ENCODE measurements at regions of chr19 and their contacts with region 1.

Region 1: GRCh38 chr19:58182989-58183816 is at the start of gene ZNF274:
- DNase-seq: peak; percentile 98
- ATAC-seq: peak; percentile 91
- H3K4me3 Mint-ChIP-seq: peak within 1 kb of the TSS; percentile 88
- H3K27ac Mint-ChIP-seq: peak within 1 kb of the TSS; percentile 99
- H3K4me1 Mint-ChIP-seq: peaks cover 16% of the 10 kb centered on the region
- H3K27me3 Mint-ChIP-seq: no peaks in the 10 kb centered on the region
- total RNA-seq, gene ZNF274: 20.2 to 20.5 TPM

Region 2: GRCh38 chr19:56538254-56538760 is 1644.9 kb before region 1 on chr19:
- CTCF ChIA-PET with region 1: no interaction called
- POLR2A ChIA-PET with region 1: no interaction called
- intact Hi-C with region 1: loop called in 1 of 2 experiments (anchors 1 kb)
- DNase-seq: peak; percentile 95
- ATAC-seq: peak; percentile 97
- H3K4me3 Mint-ChIP-seq: peak overlapping the region; percentile 74
- H3K27ac Mint-ChIP-seq: peak overlapping the region; percentile 87
- H3K4me1 Mint-ChIP-seq: peaks cover 15% of the 10 kb centered on the region
- H3K27me3 Mint-ChIP-seq: no peaks in the 10 kb centered on the region

Region 3: DNA sequence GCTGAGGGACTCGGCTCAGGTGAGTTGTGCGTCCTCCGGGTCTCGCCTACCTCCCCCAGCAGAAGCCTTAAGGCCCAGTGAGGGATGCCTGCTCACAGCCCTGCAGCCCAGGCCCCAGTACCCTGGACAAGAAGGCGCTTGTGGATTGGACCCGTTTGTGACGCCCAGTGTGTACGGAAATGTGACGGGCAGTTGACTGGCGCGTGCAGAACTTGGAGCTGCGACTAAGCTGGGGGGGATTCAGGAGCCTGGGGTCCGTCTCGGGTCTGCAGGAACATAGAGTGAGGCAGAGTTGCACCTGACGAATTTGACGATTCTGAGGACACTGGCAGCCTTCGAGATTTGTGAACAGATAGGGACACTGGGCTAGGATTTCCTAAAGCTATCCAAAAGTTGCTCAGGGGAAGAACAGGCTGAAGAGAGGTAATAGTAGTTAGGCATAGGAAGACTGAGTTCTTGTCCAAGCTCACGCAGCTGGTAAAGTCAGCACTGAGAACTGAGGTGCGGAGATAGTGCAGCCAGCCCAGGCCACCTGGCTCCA is 500.9 kb before region 1 on chr19:
- CTCF ChIA-PET with region 1: no interaction called
- POLR2A ChIA-PET with region 1: no interaction called
- intact Hi-C with region 1: loop called in 1 of 2 experiments (anchors 2 kb)
- DNase-seq: no peak
- ATAC-seq: no peak
- H3K4me3 Mint-ChIP-seq: peak overlapping the region; percentile 85
- H3K27ac Mint-ChIP-seq: peak overlapping the region; percentile 93
- H3K4me1 Mint-ChIP-seq: peaks cover 31% of the 10 kb centered on the region
- H3K27me3 Mint-ChIP-seq: peaks cover under 1% of the 10 kb centered on the region

Region 4: DNA sequence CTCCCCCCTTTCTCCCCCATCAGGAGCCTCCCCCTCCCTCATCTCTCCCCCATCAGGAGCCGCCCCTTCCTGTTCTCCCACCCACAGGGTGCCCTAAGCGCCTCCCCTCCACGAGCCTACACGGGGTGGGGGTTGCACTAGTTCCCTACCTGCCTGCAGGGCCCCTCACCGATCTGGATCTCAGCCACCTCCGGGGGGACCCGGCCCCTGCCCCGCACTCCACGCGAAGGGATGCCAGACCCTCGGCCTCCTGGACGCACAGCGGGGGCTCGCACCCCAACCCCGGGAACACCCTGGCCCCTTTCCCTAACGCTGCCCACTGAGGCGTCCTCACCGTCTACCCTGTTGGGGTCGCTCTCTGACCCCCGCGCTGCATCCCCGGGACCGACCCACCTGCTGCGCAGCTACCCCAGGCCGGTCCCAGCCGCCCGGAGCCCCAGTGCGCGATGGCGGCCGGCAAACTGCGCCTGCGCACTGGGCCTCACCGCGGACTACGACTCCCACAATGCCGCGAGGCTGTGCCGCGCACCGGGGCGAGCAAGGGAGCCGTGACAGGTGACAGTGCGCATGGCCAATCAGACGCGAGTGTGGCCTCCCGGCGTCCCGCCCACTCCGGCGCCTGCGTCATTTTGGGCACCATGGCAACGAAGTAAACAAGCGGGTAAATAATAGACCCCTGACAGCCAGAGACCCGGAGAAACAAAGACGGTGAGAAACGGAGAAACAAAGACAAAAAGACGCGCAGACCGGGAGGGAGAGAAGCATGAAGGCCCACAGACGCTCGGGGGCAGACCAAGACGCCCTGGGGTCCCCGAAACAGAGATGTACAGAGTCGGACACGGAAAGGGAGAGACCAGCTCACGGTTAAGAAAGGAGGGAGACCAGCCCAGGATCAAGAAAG is 85.2 kb before region 1 on chr19 and contains the start of gene ZSCAN18:
- CTCF ChIA-PET with region 1: no interaction called
- POLR2A ChIA-PET with region 1: no interaction called
- intact Hi-C with region 1: loop called in 1 of 2 experiments (anchors 1 kb)
- DNase-seq: peak; percentile 97
- ATAC-seq: peak; percentile 99
- H3K4me3 Mint-ChIP-seq: peak within 1 kb of the TSS; percentile 82
- H3K27ac Mint-ChIP-seq: peak within 1 kb of the TSS; percentile 97
- H3K4me1 Mint-ChIP-seq: peaks cover 13% of the 10 kb centered on the region
- H3K27me3 Mint-ChIP-seq: no peaks in the 10 kb centered on the region
- total RNA-seq, gene ZSCAN18: 23.1 to 29.2 TPM

Region 5: GRCh38 chr19:58128041-58128685 is 55.0 kb before region 1 on chr19:
- CTCF ChIA-PET with region 1: no interaction called
- POLR2A ChIA-PET with region 1: no interaction called
- intact Hi-C with region 1: no loop called
- DNase-seq: no peak
- ATAC-seq: no peak
- H3K4me3 Mint-ChIP-seq: no peak overlapping the region
- H3K27ac Mint-ChIP-seq: no peak overlapping the region
- H3K4me1 Mint-ChIP-seq: no peaks in the 10 kb centered on the region
- H3K27me3 Mint-ChIP-seq: no peaks in the 10 kb centered on the region

Region 6: GRCh38 chr19:58268344-58268743 is 85.1 kb after region 1 on chr19:
- CTCF ChIA-PET with region 1: no interaction called
- POLR2A ChIA-PET with region 1: no interaction called
- intact Hi-C with region 1: no loop called
- DNase-seq: no peak
- ATAC-seq: no peak
- H3K4me3 Mint-ChIP-seq: no peak overlapping the region
- H3K27ac Mint-ChIP-seq: no peak overlapping the region
- H3K4me1 Mint-ChIP-seq: no peaks in the 10 kb centered on the region
- H3K27me3 Mint-ChIP-seq: no peaks in the 10 kb centered on the region

Region 7: DNA sequence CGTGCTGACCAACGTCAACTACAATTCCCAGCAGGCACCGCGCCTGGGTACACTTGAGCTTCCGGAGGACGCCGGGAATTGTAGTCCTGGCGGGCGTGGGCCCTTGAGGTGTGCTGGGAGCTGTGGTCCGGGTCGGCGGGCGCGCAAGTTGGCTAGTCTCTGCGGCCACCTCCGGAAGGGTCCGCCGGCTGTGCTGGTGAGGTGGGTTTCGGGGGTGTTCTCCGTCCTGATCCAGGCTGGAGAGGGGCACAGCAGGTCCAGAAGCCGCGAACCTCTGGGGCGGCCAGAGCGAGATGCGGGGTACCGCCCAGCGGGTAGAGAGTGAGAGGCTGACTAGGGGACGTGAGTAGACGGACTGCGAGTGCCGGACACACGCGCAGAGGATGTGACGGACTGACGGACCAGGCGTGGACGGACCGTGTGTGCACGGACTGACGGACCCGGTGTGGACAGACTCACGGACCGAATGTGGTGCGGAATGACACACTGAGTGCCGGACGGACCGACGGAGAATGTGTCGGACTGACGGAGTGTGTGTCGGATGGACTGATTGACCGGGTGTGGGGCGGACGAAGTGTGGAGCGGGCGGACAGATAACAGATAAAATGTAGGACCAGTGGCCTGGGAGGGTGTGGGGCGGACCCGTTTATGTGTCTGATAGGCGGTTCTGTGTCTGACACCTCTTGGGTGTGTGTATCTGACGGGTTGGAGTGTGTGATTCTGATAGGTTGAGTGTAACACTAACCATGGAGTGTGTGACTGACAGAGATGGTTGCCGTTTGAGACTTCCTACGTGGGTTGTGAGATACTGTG is 143.9 kb after region 1 on chr19 and contains the start of gene ZSCAN22:
- CTCF ChIA-PET with region 1: no interaction called
- POLR2A ChIA-PET with region 1: no interaction called
- intact Hi-C with region 1: loop called in 1 of 2 experiments (anchors 1 kb)
- DNase-seq: peak; percentile 96
- ATAC-seq: peak; percentile 91
- H3K4me3 Mint-ChIP-seq: no peak within 1 kb of the TSS
- H3K27ac Mint-ChIP-seq: no peak within 1 kb of the TSS
- H3K4me1 Mint-ChIP-seq: peaks cover 4% of the 10 kb centered on the region
- H3K27me3 Mint-ChIP-seq: no peaks in the 10 kb centered on the region
- total RNA-seq, gene ZSCAN22: 3.1 to 3.8 TPM

Region 8: GRCh38 chr19:58439576-58440554 is 256.7 kb after region 1 on chr19 and contains the start of gene ZNF132:
- CTCF ChIA-PET with region 1: interaction called, 4 read pairs
- POLR2A ChIA-PET with region 1: no interaction called
- intact Hi-C with region 1: loop called in 1 of 2 experiments (anchors 1 kb)
- DNase-seq: peak; percentile 96
- ATAC-seq: peak; percentile 98
- H3K4me3 Mint-ChIP-seq: peak within 1 kb of the TSS; percentile 82
- H3K27ac Mint-ChIP-seq: peak within 1 kb of the TSS; percentile 95
- H3K4me1 Mint-ChIP-seq: peaks cover 29% of the 10 kb centered on the region
- H3K27me3 Mint-ChIP-seq: no peaks in the 10 kb centered on the region
- total RNA-seq, gene ZNF132: 3.3 to 4.4 TPM

Region 9: GRCh38 chr19:58558623-58559274 is 375.5 kb after region 1 on chr19:
- CTCF ChIA-PET with region 1: no interaction called
- POLR2A ChIA-PET with region 1: interaction called, 3 read pairs
- intact Hi-C with region 1: loop called in 1 of 2 experiments (anchors 1 kb)
- DNase-seq: peak; percentile 100
- ATAC-seq: peak; percentile 69
- H3K4me3 Mint-ChIP-seq: peak overlapping the region; percentile 92
- H3K27ac Mint-ChIP-seq: peak overlapping the region; percentile 100
- H3K4me1 Mint-ChIP-seq: peaks cover 65% of the 10 kb centered on the region
- H3K27me3 Mint-ChIP-seq: no peaks in the 10 kb centered on the region